Naive thymus-derived CD4-positive, alpha-beta T cell (primary cell): ENCODE measurements at regions of chr14 and their contacts with region 1.

Region 1: GRCh38 chr14:92039719-92040430 is at the start of gene TRIP11:
- DNase-seq: peak; percentile 88 to 97 (median 94)
- ATAC-seq: peak; percentile 96
- H3K4me3 ChIP-seq: peak within 1 kb of the TSS; percentile 86
- H3K4me3 Mint-ChIP-seq: peak within 1 kb of the TSS; percentile 91 to 99 (median 96)
- H3K27ac ChIP-seq: peak within 1 kb of the TSS; percentile 84
- H3K27ac Mint-ChIP-seq: peak within 1 kb of the TSS in 7 of 9 donors; percentile 96 to 100 (median 98)
- H3K4me1 ChIP-seq: peaks cover 20 to 21% of the 10 kb centered on the region in 2 donors
- H3K4me1 Mint-ChIP-seq: peaks cover 6 to 50% (median 35%) of the 10 kb centered on the region in 7 donors
- H3K27me3 ChIP-seq: no peaks in the 10 kb centered on the region
- H3K27me3 Mint-ChIP-seq: no peaks in the 10 kb centered on the region
- total RNA-seq, gene TRIP11: 34.1 to 72.4 (median 58.4) TPM

Region 2: GRCh38 chr14:91249841-91250616 is 789.8 kb before region 1 on chr14:
- CTCF ChIA-PET with region 1: no interaction called
- POLR2A ChIA-PET with region 1: interaction called, 4 read pairs
- intact Hi-C with region 1: loop called in 1 of 2 experiments (anchors 10 kb)
- DNase-seq: peak in 4 of 9 donors; percentile 20 to 52 (median 40)
- ATAC-seq: peak; percentile 8
- H3K4me3 ChIP-seq: peak overlapping the region; percentile 36
- H3K4me3 Mint-ChIP-seq: peak overlapping the region; percentile 27 to 84 (median 57)
- H3K27ac ChIP-seq: peak overlapping the region; percentile 55
- H3K27ac Mint-ChIP-seq: peak overlapping the region; percentile 53 to 98 (median 91)
- H3K4me1 ChIP-seq: peaks cover 63 to 81% of the 10 kb centered on the region in 2 donors
- H3K4me1 Mint-ChIP-seq: peaks cover 54 to 87% (median 80%) of the 10 kb centered on the region in 7 donors
- H3K27me3 ChIP-seq: no peaks in the 10 kb centered on the region
- H3K27me3 Mint-ChIP-seq: no peaks in the 10 kb centered on the region

Region 3: GRCh38 chr14:91841065-91841464 is 198.8 kb before region 1 on chr14:
- CTCF ChIA-PET with region 1: no interaction called
- POLR2A ChIA-PET with region 1: no interaction called
- intact Hi-C with region 1: no loop called
- DNase-seq: no peak
- ATAC-seq: no peak
- H3K4me3 ChIP-seq: no peak overlapping the region
- H3K4me3 Mint-ChIP-seq: peak overlapping the region in 2 of 10 donors; percentile 27 to 33
- H3K27ac ChIP-seq: peak overlapping the region; percentile 1
- H3K27ac Mint-ChIP-seq: peak overlapping the region in 8 of 9 donors; percentile 28 to 89 (median 72)
- H3K4me1 ChIP-seq: peaks cover 33 to 40% of the 10 kb centered on the region in 2 donors
- H3K4me1 Mint-ChIP-seq: peaks cover 32 to 93% (median 82%) of the 10 kb centered on the region in 7 donors
- H3K27me3 ChIP-seq: no peaks in the 10 kb centered on the region
- H3K27me3 Mint-ChIP-seq: peaks cover 0 to 2% (median 0%) of the 10 kb centered on the region in 5 donors

Region 4: DNA sequence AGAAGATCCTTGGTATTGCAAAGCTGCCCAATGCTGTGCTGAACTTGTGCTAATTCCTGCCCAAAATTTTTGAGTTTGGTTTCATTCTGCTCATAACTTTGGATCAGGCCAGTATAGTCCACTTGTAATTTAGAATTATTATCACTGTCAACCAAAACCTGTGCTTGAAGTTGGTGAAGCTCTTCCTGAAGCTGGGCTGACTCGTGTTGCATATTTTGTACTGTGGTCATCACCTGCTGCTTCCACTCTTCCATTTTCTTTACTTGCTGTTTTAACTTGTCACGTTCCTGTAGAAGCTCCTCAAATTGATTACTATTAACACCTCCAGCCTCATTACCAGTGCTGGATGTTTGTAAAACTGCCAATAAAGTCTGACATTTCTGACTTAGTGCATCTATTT is 35.8 kb before region 1 on chr14:
- CTCF ChIA-PET with region 1: no interaction called
- POLR2A ChIA-PET with region 1: interaction called, 18 read pairs
- intact Hi-C with region 1: loop called in 1 of 2 experiments (anchors 5 kb)
- DNase-seq: no peak
- ATAC-seq: no peak
- H3K4me3 ChIP-seq: no peak overlapping the region
- H3K4me3 Mint-ChIP-seq: peak overlapping the region in 8 of 10 donors; percentile 1 to 84 (median 69)
- H3K27ac ChIP-seq: peak overlapping the region; percentile 52
- H3K27ac Mint-ChIP-seq: peak overlapping the region in 8 of 9 donors; percentile 74 to 95 (median 88)
- H3K4me1 ChIP-seq: peaks cover 4 to 37% of the 10 kb centered on the region in 2 donors
- H3K4me1 Mint-ChIP-seq: peaks cover 30 to 63% (median 58%) of the 10 kb centered on the region in 7 donors
- H3K27me3 ChIP-seq: no peaks in the 10 kb centered on the region
- H3K27me3 Mint-ChIP-seq: no peaks in the 10 kb centered on the region

Region 5: GRCh38 chr14:92057976-92058917 is 18.4 kb after region 1 on chr14:
- CTCF ChIA-PET with region 1: no interaction called
- POLR2A ChIA-PET with region 1: interaction called, 5 read pairs
- intact Hi-C with region 1: loop called in 1 of 2 experiments (anchors 2 kb)
- DNase-seq: no peak
- ATAC-seq: no peak
- H3K4me3 ChIP-seq: no peak overlapping the region
- H3K4me3 Mint-ChIP-seq: no peak overlapping the region
- H3K27ac ChIP-seq: no peak overlapping the region
- H3K27ac Mint-ChIP-seq: no peak overlapping the region
- H3K4me1 ChIP-seq: no peaks in the 10 kb centered on the region
- H3K4me1 Mint-ChIP-seq: no peaks in the 10 kb centered on the region
- H3K27me3 ChIP-seq: no peaks in the 10 kb centered on the region
- H3K27me3 Mint-ChIP-seq: no peaks in the 10 kb centered on the region

Region 6: DNA sequence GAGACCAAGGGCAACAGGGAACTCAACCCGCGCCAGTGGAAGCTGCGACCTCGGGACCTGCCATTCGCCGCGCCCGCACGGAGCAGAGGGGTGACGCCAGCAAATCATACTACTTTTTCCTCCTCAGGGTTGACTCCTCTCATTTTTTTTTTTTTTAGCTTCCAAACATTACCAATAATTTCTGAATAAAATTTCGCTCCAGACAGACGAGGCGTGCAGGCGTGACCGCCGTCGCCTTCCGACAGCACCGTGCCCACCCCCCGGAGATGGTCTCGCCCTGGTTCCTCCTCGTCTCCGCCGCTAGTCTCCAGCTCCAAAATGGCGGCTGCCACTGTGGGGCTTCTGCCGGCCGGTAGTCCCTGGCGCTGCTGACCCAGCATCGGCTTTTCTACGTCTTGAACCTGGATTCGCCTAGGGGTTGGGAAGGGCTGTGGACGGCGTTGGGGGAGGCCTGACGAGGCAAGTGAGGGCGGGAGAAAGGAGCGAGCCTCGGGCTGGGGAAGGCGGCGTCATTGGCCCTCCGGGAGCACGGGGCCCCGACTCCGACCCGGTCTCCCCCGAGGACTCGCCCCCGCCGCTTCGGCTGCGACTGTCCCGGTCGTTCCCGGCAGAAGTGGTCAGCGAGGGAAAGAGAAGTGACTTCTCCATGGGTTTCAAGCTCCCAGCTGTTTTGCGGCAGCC is 81.9 kb after region 1 on chr14 and contains the starts of genes CPSF2 and NDUFB1:
- CTCF ChIA-PET with region 1: interaction called, 11 read pairs
- POLR2A ChIA-PET with region 1: interaction called, 36 read pairs
- intact Hi-C with region 1: loop called (anchors 1 kb)
- DNase-seq: peak; percentile 74 to 87 (median 85)
- ATAC-seq: peak; percentile 92
- H3K4me3 ChIP-seq: peak within 1 kb of the TSS; percentile 78
- H3K4me3 Mint-ChIP-seq: peak within 1 kb of the TSS; percentile 88 to 100 (median 99)
- H3K27ac ChIP-seq: peak within 1 kb of the TSS; percentile 92
- H3K27ac Mint-ChIP-seq: peak within 1 kb of the TSS; percentile 96 to 100 (median 100)
- H3K4me1 ChIP-seq: peaks cover 17 to 19% of the 10 kb centered on the region in 2 donors
- H3K4me1 Mint-ChIP-seq: peaks cover 27 to 72% (median 53%) of the 10 kb centered on the region in 7 donors
- H3K27me3 ChIP-seq: no peaks in the 10 kb centered on the region
- H3K27me3 Mint-ChIP-seq: no peaks in the 10 kb centered on the region
- total RNA-seq, gene CPSF2: 30.2 to 77.4 (median 60.4) TPM
- total RNA-seq, gene NDUFB1: 55.1 to 107 (median 89.7) TPM

Region 7: GRCh38 chr14:93772263-93772662 is 1732.4 kb after region 1 on chr14:
- CTCF ChIA-PET with region 1: no interaction called
- POLR2A ChIA-PET with region 1: no interaction called
- intact Hi-C with region 1: no loop called
- DNase-seq: no peak
- ATAC-seq: no peak
- H3K4me3 ChIP-seq: no peak overlapping the region
- H3K4me3 Mint-ChIP-seq: no peak overlapping the region
- H3K27ac ChIP-seq: no peak overlapping the region
- H3K27ac Mint-ChIP-seq: no peak overlapping the region
- H3K4me1 ChIP-seq: no peaks in the 10 kb centered on the region
- H3K4me1 Mint-ChIP-seq: no peaks in the 10 kb centered on the region
- H3K27me3 ChIP-seq: no peaks in the 10 kb centered on the region
- H3K27me3 Mint-ChIP-seq: peaks cover 0 to 31% (median 8%) of the 10 kb centered on the region in 5 donors